CD8-positive, alpha-beta T cell (primary cell): ENCODE measurements at regions of chr12 and their contacts with region 1.

Region 1: DNA sequence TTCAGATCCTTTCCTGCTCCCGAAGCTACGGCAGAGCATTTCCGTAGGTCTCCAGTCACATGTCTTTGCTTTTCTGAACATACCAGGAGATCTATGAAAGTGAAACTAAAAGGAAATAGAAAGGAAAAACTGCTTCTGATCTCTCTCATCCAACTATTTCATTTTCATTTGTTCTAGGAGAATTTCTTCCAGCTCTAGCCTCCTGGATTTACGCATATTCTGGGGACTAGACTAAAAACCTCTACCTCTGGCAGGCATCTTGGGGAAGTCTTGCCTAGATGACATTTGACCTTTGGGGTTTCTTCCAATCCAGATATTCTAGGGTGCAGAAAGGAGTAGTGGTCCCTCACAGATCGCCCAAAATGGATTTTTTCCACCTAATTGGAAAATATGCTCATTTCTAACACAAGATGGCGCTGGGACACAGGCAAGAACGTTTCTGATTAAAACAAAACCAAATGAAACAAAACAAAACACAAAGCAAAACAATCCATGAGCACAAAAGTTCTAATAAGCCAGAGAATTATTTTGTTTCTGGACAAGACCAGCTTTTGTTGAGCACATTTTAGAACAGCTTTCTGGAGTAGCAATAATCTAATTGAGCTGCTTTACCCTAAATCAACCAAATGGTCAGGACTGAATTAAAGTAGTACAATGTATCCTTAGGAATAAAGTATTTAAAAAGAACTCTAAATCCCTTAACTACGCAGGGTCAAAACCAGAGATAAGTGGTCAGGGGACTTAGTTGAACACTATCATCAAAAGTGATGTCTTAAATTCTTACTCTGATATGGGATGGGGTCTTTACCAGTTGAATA is 12.3 kb upstream of the PARP11 start:
- DNase-seq: peak in 8 of 9 experiments; percentile 28 to 76 (median 43)
- ATAC-seq: peak; percentile 62
- H3K4me3 ChIP-seq: no peak overlapping the region
- H3K4me3 Mint-ChIP-seq: no peak overlapping the region
- H3K27ac ChIP-seq: no peak overlapping the region
- H3K27ac Mint-ChIP-seq: peak overlapping the region; percentile 83
- H3K4me1 ChIP-seq: no peaks in the 10 kb centered on the region
- H3K4me1 Mint-ChIP-seq: peaks cover 9% of the 10 kb centered on the region
- H3K27me3 ChIP-seq: no peaks in the 10 kb centered on the region
- H3K27me3 Mint-ChIP-seq: no peaks in the 10 kb centered on the region
- CTCF ChIP-seq: peak; percentile 93

Region 2: DNA sequence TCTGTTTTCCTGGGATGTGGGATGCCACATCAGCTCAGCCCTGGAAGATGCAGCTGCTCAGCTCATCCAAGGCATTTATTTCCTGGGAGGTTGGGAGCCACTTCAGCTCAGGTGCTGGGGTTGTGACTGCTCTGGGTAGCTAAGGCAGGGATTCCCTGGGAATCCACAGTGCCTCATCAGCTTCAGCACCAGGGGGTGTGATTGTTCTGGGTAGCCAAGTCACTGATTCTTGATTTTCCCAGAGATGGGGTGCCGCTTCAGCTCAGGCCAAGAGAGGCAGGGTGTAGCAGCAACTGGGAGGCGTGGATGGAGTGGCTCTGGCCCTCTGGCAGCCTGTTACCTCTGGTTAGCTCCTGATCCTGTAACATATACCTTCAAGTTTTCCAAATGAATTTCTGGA is 475.8 kb before region 1 on chr12:
- CTCF ChIA-PET with region 1: no interaction called
- POLR2A ChIA-PET with region 1: no interaction called
- intact Hi-C with region 1: no loop called
- DNase-seq: no peak
- ATAC-seq: no peak
- H3K4me3 ChIP-seq: no peak overlapping the region
- H3K4me3 Mint-ChIP-seq: no peak overlapping the region
- H3K27ac ChIP-seq: no peak overlapping the region
- H3K27ac Mint-ChIP-seq: no peak overlapping the region
- H3K4me1 ChIP-seq: no peaks in the 10 kb centered on the region
- H3K4me1 Mint-ChIP-seq: no peaks in the 10 kb centered on the region
- H3K27me3 ChIP-seq: peaks cover 0 to 4% of the 10 kb centered on the region in 2 experiments
- H3K27me3 Mint-ChIP-seq: peaks cover 2% of the 10 kb centered on the region
- CTCF ChIP-seq: no peak

Region 3: DNA sequence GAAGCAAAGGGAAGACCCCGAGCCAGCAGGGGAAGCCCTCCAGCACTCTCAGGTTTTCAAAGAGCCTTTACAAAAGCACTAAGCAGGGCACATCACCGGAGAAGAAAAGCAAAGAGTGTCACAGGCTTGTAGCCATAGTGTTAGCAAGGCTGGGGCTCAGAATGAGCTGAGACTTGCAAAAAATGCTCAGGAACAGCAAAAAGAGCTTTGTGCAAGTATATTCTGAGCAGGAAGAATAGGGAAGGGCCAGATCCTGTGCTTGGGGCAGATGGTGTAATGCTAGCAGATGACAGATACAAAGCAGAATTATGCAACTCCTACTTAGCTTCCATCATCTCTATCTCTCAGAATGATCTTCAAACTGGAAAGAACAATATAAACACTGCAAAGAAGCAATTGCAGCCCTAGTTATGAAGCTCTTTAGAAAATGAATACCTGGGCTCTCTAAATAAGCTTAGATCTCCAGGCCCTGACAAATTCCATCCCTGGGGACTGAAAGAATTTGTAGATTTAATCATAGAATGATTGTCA is 11.4 kb after region 1 on chr12:
- CTCF ChIA-PET with region 1: interaction called, 84 read pairs
- POLR2A ChIA-PET with region 1: interaction called, 4 read pairs
- intact Hi-C with region 1: no loop called
- DNase-seq: peak in 1 of 9 experiments; percentile 7
- ATAC-seq: peak; percentile 28
- H3K4me3 ChIP-seq: peak overlapping the region in 1 of 2 experiments; percentile 9
- H3K4me3 Mint-ChIP-seq: peak overlapping the region; percentile 65
- H3K27ac ChIP-seq: peak overlapping the region; percentile 26 to 47
- H3K27ac Mint-ChIP-seq: peak overlapping the region; percentile 96
- H3K4me1 ChIP-seq: peaks cover 52% of the 10 kb centered on the region
- H3K4me1 Mint-ChIP-seq: peaks cover 39% of the 10 kb centered on the region
- H3K27me3 ChIP-seq: no peaks in the 10 kb centered on the region
- H3K27me3 Mint-ChIP-seq: no peaks in the 10 kb centered on the region
- CTCF ChIP-seq: no peak

Region 4: GRCh38 chr12:3947781-3948180 is 62.3 kb after region 1 on chr12:
- CTCF ChIA-PET with region 1: interaction called, 20 read pairs
- POLR2A ChIA-PET with region 1: interaction called, 3 read pairs
- intact Hi-C with region 1: no loop called
- DNase-seq: peak in 2 of 9 experiments; percentile 55 to 75
- ATAC-seq: peak; percentile 75
- H3K4me3 ChIP-seq: no peak overlapping the region
- H3K4me3 Mint-ChIP-seq: peak overlapping the region; percentile 36
- H3K27ac ChIP-seq: peak overlapping the region; percentile 38 to 61
- H3K27ac Mint-ChIP-seq: peak overlapping the region; percentile 98
- H3K4me1 ChIP-seq: peaks cover 53% of the 10 kb centered on the region
- H3K4me1 Mint-ChIP-seq: peaks cover 62% of the 10 kb centered on the region
- H3K27me3 ChIP-seq: no peaks in the 10 kb centered on the region
- H3K27me3 Mint-ChIP-seq: no peaks in the 10 kb centered on the region
- CTCF ChIP-seq: no peak

Region 5: GRCh38 chr12:3980504-3981272 is 95.2 kb after region 1 on chr12:
- CTCF ChIA-PET with region 1: interaction called, 226 read pairs
- POLR2A ChIA-PET with region 1: no interaction called
- intact Hi-C with region 1: no loop called
- DNase-seq: no peak
- ATAC-seq: no peak
- H3K4me3 ChIP-seq: no peak overlapping the region
- H3K4me3 Mint-ChIP-seq: no peak overlapping the region
- H3K27ac ChIP-seq: no peak overlapping the region
- H3K27ac Mint-ChIP-seq: no peak overlapping the region
- H3K4me1 ChIP-seq: peaks cover 27% of the 10 kb centered on the region
- H3K4me1 Mint-ChIP-seq: peaks cover 34% of the 10 kb centered on the region
- H3K27me3 ChIP-seq: no peaks in the 10 kb centered on the region
- H3K27me3 Mint-ChIP-seq: no peaks in the 10 kb centered on the region
- CTCF ChIP-seq: no peak

Region 6: GRCh38 chr12:4006743-4007142 is 121.3 kb after region 1 on chr12:
- CTCF ChIA-PET with region 1: interaction called, 226 read pairs
- POLR2A ChIA-PET with region 1: no interaction called
- intact Hi-C with region 1: no loop called
- DNase-seq: no peak
- ATAC-seq: no peak
- H3K4me3 ChIP-seq: no peak overlapping the region
- H3K4me3 Mint-ChIP-seq: no peak overlapping the region
- H3K27ac ChIP-seq: no peak overlapping the region
- H3K27ac Mint-ChIP-seq: no peak overlapping the region
- H3K4me1 ChIP-seq: no peaks in the 10 kb centered on the region
- H3K4me1 Mint-ChIP-seq: no peaks in the 10 kb centered on the region
- H3K27me3 ChIP-seq: no peaks in the 10 kb centered on the region
- H3K27me3 Mint-ChIP-seq: no peaks in the 10 kb centered on the region
- CTCF ChIP-seq: no peak

Region 7: DNA sequence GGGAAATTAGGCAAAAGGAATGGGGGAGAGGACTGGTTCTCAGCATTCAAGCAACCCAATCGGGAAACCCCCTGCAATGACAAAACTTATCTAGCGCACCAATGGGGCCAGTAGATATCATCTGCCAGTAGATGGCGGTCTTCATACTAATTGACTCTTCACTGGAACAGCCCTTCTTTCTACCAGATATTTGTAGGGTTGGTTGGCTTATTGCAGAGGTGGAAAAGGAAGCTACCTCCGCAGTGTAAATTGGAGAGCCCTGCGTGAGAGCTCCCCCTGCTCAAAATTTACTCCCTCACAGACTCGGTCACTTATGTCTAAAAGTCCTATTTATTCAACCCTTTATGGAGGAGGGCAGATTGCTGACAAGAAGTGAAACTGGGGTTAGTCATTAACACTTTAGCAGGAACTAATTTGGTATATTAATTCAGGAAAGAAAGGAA is 222.0 kb after region 1 on chr12:
- CTCF ChIA-PET with region 1: interaction called, 10 read pairs
- POLR2A ChIA-PET with region 1: no interaction called
- intact Hi-C with region 1: loop called (anchors 2 kb)
- DNase-seq: peak; percentile 42 to 93 (median 67)
- ATAC-seq: peak; percentile 98
- H3K4me3 ChIP-seq: no peak overlapping the region
- H3K4me3 Mint-ChIP-seq: peak overlapping the region; percentile 53
- H3K27ac ChIP-seq: peak overlapping the region in 1 of 2 experiments; percentile 72
- H3K27ac Mint-ChIP-seq: peak overlapping the region; percentile 94
- H3K4me1 ChIP-seq: peaks cover 12% of the 10 kb centered on the region
- H3K4me1 Mint-ChIP-seq: peaks cover 17% of the 10 kb centered on the region
- H3K27me3 ChIP-seq: no peaks in the 10 kb centered on the region
- H3K27me3 Mint-ChIP-seq: peaks cover 4% of the 10 kb centered on the region
- CTCF ChIP-seq: peak; percentile 80

Region 8: GRCh38 chr12:4483885-4484823 is 598.7 kb after region 1 on chr12:
- CTCF ChIA-PET with region 1: no interaction called
- POLR2A ChIA-PET with region 1: no interaction called
- intact Hi-C with region 1: no loop called
- DNase-seq: no peak
- ATAC-seq: no peak
- H3K4me3 ChIP-seq: no peak overlapping the region
- H3K4me3 Mint-ChIP-seq: no peak overlapping the region
- H3K27ac ChIP-seq: no peak overlapping the region
- H3K27ac Mint-ChIP-seq: no peak overlapping the region
- H3K4me1 ChIP-seq: no peaks in the 10 kb centered on the region
- H3K4me1 Mint-ChIP-seq: no peaks in the 10 kb centered on the region
- H3K27me3 ChIP-seq: no peaks in the 10 kb centered on the region
- H3K27me3 Mint-ChIP-seq: no peaks in the 10 kb centered on the region
- CTCF ChIP-seq: no peak

Region 9: GRCh38 chr12:4526923-4527546 is 641.5 kb after region 1 on chr12:
- CTCF ChIA-PET with region 1: no interaction called
- POLR2A ChIA-PET with region 1: no interaction called
- intact Hi-C with region 1: loop called (anchors 5 kb)
- DNase-seq: peak in 2 of 9 experiments; percentile 14 to 34
- ATAC-seq: peak; percentile 52
- H3K4me3 ChIP-seq: no peak overlapping the region
- H3K4me3 Mint-ChIP-seq: no peak overlapping the region
- H3K27ac ChIP-seq: no peak overlapping the region
- H3K27ac Mint-ChIP-seq: no peak overlapping the region
- H3K4me1 ChIP-seq: peaks cover 9% of the 10 kb centered on the region
- H3K4me1 Mint-ChIP-seq: peaks cover 5% of the 10 kb centered on the region
- H3K27me3 ChIP-seq: no peaks in the 10 kb centered on the region
- H3K27me3 Mint-ChIP-seq: no peaks in the 10 kb centered on the region
- CTCF ChIP-seq: peak; percentile 93